Left ventricle myocardium superior (tissue), 1 donor: ENCODE measurements at regions of chr3 and their contacts with region 1.

Region 1: GRCh38 chr3:11236595-11237461 is 35.4 kb upstream of the ATG7 start:
- DNase-seq: peak; percentile 67
- ATAC-seq: peak; percentile 52

Region 2: DNA sequence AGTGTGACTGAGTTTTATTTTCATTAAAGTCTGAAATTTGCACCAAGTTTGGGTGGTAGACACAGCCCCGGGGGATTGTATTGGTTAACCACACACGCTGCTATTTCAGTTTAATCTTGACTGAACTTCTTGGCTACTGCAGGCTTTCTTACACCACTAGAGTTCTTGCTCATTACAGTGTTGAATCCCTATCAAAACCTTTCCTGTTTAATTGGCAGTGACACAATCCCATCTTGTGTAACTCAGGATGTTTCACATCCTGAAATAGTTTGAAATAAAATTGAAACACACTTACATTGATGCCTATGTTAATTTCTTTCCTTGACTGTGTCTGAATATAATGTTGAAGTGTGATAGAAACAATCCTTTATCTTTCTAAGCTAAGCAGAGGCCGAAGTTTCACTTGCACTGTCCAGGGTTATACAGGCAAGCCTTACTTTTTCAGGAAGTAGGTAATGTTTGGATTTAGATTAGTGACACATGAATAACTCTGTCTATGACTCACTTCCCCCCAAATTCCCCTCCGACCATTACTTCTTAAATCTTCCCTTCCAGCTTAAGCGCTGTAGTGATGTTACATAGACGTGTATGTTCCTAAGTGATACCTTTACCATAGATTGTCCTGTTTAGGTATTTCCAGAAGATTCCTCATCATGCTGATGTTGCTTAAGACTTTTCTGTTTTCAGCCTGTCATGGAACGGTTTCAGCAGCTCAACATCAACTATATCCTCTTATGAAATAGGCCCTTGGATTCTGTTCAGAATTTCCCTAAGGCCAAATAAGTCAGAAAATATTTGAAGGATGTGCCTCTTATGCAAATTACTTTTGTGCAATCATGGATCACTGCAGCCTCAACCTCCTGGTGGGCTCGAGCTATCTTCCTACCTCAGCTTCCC is 52.2 kb after region 1 on chr3:
- intact Hi-C with region 1: no loop called
- DNase-seq: no peak
- ATAC-seq: peak; percentile 86

Region 3: DNA sequence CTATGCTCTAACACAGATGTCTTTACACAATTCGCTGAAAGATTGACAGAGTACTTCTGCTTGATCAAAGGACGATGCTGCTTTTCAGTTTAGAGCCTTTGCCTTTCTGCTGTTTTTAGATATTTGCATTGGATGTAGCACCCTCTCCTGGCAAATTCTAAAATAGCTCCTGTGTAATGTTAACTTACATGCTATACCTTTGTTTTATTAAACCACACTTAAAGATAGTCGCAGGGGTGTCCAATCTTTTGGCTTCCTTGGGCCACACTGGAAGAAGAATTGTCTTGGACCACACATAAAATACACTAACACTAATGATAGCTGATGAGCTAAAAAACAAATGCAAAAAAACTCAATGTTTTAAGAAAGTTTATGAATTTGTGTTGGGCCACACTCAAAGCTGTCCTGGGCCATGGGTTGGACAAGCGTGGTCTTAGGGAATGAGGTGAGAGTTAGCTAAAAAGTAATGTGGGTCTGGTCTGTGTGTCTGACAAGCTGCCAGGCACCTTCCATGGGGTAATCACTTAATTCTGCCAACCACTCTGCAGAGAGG is 98.3 kb after region 1 on chr3:
- intact Hi-C with region 1: loop called (anchors 5 kb)
- DNase-seq: no peak
- ATAC-seq: peak; percentile 57